ENCODE measurements at regions of chr2 and their contacts with region 1.

Region 1: GRCh38 chr2:58762176-58762781 is 521.2 kb upstream of the FANCL start:
- DNase-seq: peak; percentile 40
- H3K4me3 ChIP-seq: no peak overlapping the region
- H3K27ac ChIP-seq: no peak overlapping the region
- H3K4me1 ChIP-seq: no peaks in the 10 kb centered on the region
- H3K27me3 ChIP-seq: peaks cover 0 to 2% of the 10 kb centered on the region in 2 experiments
- CTCF ChIP-seq: peak; percentile 54 to 58
- POLR2A ChIP-seq: no peak

Region 2: GRCh38 chr2:58571181-58571852 is 191.0 kb before region 1 on chr2:
- CTCF ChIA-PET with region 1: interaction called, 24 read pairs
- POLR2A ChIA-PET with region 1: no interaction called
- dilution Hi-C with region 1: no loop called
- intact Hi-C with region 1: loop called (anchors 1 kb)
- DNase-seq: peak; percentile 84
- H3K4me3 ChIP-seq: no peak overlapping the region
- H3K27ac ChIP-seq: no peak overlapping the region
- H3K4me1 ChIP-seq: peaks cover 2% of the 10 kb centered on the region
- H3K27me3 ChIP-seq: no peaks in the 10 kb centered on the region
- CTCF ChIP-seq: peak; percentile 69 to 81
- POLR2A ChIP-seq: no peak

Region 3: GRCh38 chr2:58702302-58702885 is 59.9 kb before region 1 on chr2:
- CTCF ChIA-PET with region 1: no interaction called
- POLR2A ChIA-PET with region 1: no interaction called
- dilution Hi-C with region 1: no loop called
- intact Hi-C with region 1: no loop called
- DNase-seq: peak; percentile 60
- H3K4me3 ChIP-seq: no peak overlapping the region
- H3K27ac ChIP-seq: no peak overlapping the region
- H3K4me1 ChIP-seq: peaks cover 11% of the 10 kb centered on the region
- H3K27me3 ChIP-seq: no peaks in the 10 kb centered on the region
- CTCF ChIP-seq: peak in 1 of 2 donors; percentile 4
- POLR2A ChIP-seq: no peak

Region 4: GRCh38 chr2:60152226-60152833 is 1390.1 kb after region 1 on chr2:
- CTCF ChIA-PET with region 1: no interaction called
- POLR2A ChIA-PET with region 1: no interaction called
- dilution Hi-C with region 1: no loop called
- intact Hi-C with region 1: loop called (anchors 5 kb)
- DNase-seq: no peak
- H3K4me3 ChIP-seq: no peak overlapping the region
- H3K27ac ChIP-seq: no peak overlapping the region
- H3K4me1 ChIP-seq: no peaks in the 10 kb centered on the region
- H3K27me3 ChIP-seq: no peaks in the 10 kb centered on the region
- CTCF ChIP-seq: peak; percentile 17 to 33
- POLR2A ChIP-seq: no peak

Region 5: DNA sequence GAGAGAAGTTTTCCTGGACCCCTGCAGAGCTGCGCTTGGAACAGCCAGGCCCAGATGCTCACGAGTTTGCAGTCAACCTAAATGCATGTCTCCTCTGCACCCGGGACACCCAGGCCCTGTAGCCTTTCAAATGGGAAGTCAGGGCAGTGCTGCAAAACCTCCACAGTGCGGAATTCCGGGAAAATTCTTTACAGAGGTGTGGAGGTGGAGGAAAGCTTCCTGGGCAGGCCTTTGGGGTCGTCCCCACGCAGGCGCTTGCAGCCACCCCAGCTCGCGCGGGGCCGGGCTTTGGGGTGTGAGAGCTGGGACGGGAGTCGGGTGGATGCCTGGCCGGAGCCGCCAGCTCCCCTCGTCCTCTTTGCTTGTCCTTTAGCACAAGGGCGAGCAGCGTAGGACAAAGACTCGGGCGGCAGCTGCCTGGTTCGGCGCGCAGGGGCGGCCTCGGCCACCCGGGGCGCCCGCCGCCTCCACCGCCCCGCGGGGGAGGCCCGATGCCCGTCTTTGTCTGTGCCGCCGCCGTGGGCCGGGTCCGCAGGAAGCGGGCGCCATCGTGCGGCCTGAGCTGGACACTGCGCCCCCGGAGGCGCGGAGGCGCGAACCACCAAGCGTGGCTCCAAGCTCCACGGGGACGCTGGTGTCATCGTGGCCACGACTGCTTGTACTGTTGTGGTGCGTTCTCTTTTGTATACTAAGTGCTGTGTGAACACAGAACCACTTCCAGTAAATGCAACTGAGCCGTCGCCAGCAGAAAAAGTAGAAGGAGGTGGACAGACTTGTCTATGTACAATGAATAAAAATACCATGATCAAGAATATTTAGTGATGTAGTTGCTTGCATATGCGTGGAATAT is 1819.4 kb after region 1 on chr2:
- CTCF ChIA-PET with region 1: interaction called, 61 read pairs
- POLR2A ChIA-PET with region 1: no interaction called
- dilution Hi-C with region 1: no loop called
- intact Hi-C with region 1: loop called (anchors 1 kb)
- DNase-seq: peak; percentile 49
- H3K4me3 ChIP-seq: peak overlapping the region in 1 of 3 experiments; percentile 21
- H3K27ac ChIP-seq: no peak overlapping the region
- H3K4me1 ChIP-seq: no peaks in the 10 kb centered on the region
- H3K27me3 ChIP-seq: peaks cover 5 to 7% of the 10 kb centered on the region in 2 experiments
- CTCF ChIP-seq: peak; percentile 92 to 94
- POLR2A ChIP-seq: no peak

Region 6: GRCh38 chr2:60674524-60675165 is 1912.4 kb after region 1 on chr2:
- CTCF ChIA-PET with region 1: interaction called, 8 read pairs
- POLR2A ChIA-PET with region 1: no interaction called
- dilution Hi-C with region 1: no loop called
- intact Hi-C with region 1: loop called (anchors 10 kb)
- DNase-seq: peak; percentile 64
- H3K4me3 ChIP-seq: no peak overlapping the region
- H3K27ac ChIP-seq: no peak overlapping the region
- H3K4me1 ChIP-seq: no peaks in the 10 kb centered on the region
- H3K27me3 ChIP-seq: peaks cover 0 to 4% of the 10 kb centered on the region in 2 experiments
- CTCF ChIP-seq: peak; percentile 87 to 92
- POLR2A ChIP-seq: no peak

Measured in endothelial cell of umbilical vein (primary cell).